Mucosa of descending colon (tissue), 3 donors: ENCODE measurements at regions of chr11 and their contacts with region 1.

Region 1: GRCh38 chr11:6682936-6683861 is at the start of gene MRPL17:
- DNase-seq: peak; percentile 98 to 99 (median 99)
- ATAC-seq: peak; percentile 99
- H3K4me3 ChIP-seq: peak within 1 kb of the TSS; percentile 73
- H3K4me1 ChIP-seq: peaks cover 10% of the 10 kb centered on the region
- CTCF ChIP-seq: peak; percentile 94
- total RNA-seq, gene MRPL17: 21.2 to 29.7 (median 29.6) TPM

Region 2: DNA sequence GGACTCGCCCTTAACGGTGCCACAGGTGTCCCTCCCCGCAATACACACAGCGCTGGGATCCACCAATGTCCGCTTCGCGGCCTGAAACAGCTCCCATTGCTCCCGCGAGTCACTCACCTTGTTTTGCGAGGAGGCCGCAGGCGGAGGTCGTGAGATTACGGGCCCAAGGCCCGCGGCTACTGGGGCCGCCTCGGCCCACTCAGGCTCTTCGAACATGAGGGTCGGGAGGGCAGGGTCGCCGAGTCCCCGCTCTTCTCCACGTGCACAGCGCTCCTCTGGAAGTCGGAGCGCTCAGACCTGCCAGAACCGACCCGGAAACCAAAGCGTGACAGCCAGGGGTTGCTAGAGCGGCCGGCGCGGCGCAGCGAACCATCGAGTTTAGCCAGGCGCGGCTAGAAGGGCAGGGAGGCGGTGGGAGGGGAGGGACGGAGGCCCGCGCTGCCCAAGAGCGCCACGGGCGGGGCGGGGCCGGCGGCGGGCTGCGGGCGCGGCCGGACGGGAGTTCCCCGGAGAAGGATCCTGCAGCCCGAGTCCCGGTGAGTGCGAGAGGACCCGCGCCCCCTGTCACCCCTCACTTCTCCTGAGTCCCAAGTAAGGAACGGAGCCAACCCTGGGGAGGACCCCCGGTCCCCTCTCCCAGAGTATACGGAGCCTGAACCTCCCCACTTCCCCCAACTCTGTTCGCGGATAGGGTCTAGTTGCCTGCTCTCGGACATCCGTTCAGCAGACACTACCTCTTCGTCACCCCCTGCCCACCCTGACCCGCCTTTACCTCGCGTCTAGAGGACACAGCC is 79.7 kb before region 1 on chr11 and contains the starts of genes ILK and RRP8:
- intact Hi-C with region 1: loop called in 1 of 2 experiments (anchors 10 kb)
- DNase-seq: peak; percentile 92 to 97 (median 95)
- ATAC-seq: peak; percentile 95
- H3K4me3 ChIP-seq: peak within 1 kb of the TSS; percentile 91
- H3K4me1 ChIP-seq: peaks cover 35% of the 10 kb centered on the region
- CTCF ChIP-seq: no peak
- total RNA-seq, gene ILK: 113 to 323 (median 115) TPM
- total RNA-seq, gene RRP8: 20.5 to 33.7 (median 20.7) TPM

Region 3: DNA sequence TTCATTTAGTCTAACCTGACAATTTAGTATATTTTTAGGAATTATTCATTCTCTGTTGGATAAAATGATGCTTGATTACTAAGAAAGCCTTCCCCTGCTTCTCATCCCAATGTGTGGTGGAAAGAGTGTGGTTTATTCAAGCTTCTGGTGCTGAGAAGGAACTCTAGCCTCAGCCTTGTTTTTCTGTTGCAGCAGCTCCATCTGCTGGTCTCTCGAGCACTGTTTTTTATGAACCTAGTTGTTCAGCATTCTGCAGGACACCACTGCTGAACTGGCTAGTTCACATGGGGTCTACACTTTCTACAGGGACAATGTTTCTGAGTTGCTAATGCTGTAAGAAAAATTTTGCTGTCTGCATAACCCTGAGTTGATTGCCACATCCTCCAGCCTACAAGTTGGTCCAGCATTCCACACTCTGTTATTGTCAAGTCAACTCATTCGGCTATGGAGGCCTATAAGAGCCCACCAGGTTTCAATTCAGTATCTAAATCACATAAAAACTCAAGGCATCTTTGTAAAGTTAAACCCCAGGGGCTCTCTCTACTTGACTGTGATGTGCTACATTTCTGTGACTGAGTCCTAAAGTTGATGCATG is 74.3 kb after region 1 on chr11:
- intact Hi-C with region 1: no loop called
- DNase-seq: peak in 2 of 3 donors; percentile 30 to 78
- ATAC-seq: peak; percentile 74
- H3K4me3 ChIP-seq: no peak overlapping the region
- H3K4me1 ChIP-seq: no peaks in the 10 kb centered on the region
- CTCF ChIP-seq: peak; percentile 18